GM18951 (cell line): ENCODE measurements at regions of chr5 and their contacts with region 1.

Region 1: DNA sequence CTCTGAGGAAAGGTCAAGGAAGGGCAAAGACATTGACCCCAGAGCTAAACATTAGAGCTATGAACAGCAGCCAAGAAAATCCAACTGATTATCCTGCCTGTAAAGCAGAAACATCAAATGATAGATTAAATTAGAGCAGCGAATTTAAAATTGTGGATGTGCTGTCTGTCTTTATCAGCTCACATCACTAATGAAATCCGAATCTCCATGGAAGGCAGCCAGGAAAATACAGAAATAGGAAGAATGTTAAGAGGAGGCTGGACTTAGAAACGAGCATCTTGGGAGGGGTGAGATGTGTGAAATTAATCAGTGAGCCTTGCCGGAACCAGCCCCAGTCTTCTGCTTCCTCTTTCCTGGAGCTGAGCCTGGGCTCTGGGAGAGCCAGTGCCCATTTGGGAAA is 191.0 kb downstream of the PJA2 start:
- POLR2A ChIP-seq: no peak

Region 2: DNA sequence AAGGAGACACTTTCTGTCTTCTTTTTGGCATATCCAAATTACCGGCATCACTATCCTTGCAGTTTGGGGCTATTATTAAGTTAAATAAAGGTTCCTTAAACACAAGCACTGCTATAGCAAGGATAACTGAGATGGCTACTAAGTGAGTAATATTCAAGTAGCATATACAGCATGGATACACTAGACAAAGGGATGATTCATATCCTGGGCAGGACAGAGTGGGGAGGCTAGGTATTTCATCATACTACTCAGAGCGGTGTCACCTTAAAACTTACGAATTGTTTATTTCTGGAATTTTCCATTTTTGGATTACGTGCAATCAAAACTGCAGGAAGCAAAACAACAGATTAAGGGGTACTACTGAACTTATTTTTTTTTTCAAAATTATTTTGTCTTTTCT is 417.0 kb before region 1 on chr5:
- in situ Hi-C with region 1: no loop called
- POLR2A ChIP-seq: no peak

Region 3: DNA sequence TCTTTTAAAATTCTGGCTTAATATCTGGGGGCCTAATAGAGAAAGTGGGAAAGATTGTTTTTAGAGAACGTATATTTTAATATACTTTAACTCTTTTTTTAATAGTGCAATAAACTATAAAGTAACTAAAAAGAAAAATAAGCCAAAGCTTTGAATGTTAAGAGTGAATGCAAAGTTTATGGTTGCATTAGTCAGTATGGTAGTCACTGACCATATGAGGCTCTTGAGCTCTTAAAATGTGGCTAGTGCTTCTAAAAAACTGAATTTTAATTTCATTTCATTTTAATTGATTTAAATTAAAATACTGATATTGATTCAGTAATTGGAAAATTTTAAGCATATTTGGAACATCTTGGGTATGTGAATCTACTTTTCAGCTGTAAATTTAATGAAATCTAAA is 119.7 kb before region 1 on chr5:
- in situ Hi-C with region 1: no loop called
- POLR2A ChIP-seq: no peak

Region 4: DNA sequence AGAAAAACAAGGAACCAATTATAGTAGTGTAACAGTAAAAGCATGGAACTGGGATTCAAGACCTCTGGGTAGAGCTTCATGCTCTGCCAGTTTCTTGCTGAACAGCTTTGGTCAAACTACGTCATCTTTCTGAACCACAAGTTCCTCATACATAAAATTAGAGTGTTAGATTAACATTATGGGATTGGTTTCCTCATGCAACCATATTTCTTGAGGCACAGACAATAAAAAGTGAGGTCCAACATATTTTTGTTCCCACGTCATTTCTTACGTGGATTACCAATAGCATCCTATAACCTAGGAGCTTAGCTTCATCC is 1152.9 kb after region 1 on chr5:
- in situ Hi-C with region 1: loop called (anchors 10 kb)
- POLR2A ChIP-seq: no peak